CD8-positive, alpha-beta T cell (primary cell): ENCODE measurements at regions of chr10 and their contacts with region 1.

Region 1: GRCh38 chr10:30687698-30688219 is 58.2 kb upstream of the LYZL2 start:
- DNase-seq: peak; percentile 54 to 90 (median 78)
- ATAC-seq: peak; percentile 77
- H3K4me3 ChIP-seq: no peak overlapping the region
- H3K4me3 Mint-ChIP-seq: no peak overlapping the region
- H3K27ac ChIP-seq: no peak overlapping the region
- H3K27ac Mint-ChIP-seq: no peak overlapping the region
- H3K4me1 ChIP-seq: peaks cover 3% of the 10 kb centered on the region
- H3K4me1 Mint-ChIP-seq: peaks cover 3% of the 10 kb centered on the region
- H3K27me3 ChIP-seq: peaks cover 0 to 5% of the 10 kb centered on the region in 2 experiments
- H3K27me3 Mint-ChIP-seq: peaks cover 23% of the 10 kb centered on the region
- CTCF ChIP-seq: peak; percentile 97

Region 2: GRCh38 chr10:29496341-29497162 is 1191.2 kb before region 1 on chr10:
- CTCF ChIA-PET with region 1: no interaction called
- POLR2A ChIA-PET with region 1: no interaction called
- intact Hi-C with region 1: loop called in 1 of 2 experiments (anchors 5 kb)
- DNase-seq: peak; percentile 21 to 73 (median 45)
- ATAC-seq: no peak
- H3K4me3 ChIP-seq: no peak overlapping the region
- H3K4me3 Mint-ChIP-seq: no peak overlapping the region
- H3K27ac ChIP-seq: no peak overlapping the region
- H3K27ac Mint-ChIP-seq: no peak overlapping the region
- H3K4me1 ChIP-seq: no peaks in the 10 kb centered on the region
- H3K4me1 Mint-ChIP-seq: peaks cover 2% of the 10 kb centered on the region
- H3K27me3 ChIP-seq: no peaks in the 10 kb centered on the region
- H3K27me3 Mint-ChIP-seq: no peaks in the 10 kb centered on the region
- CTCF ChIP-seq: peak; percentile 96

Region 3: GRCh38 chr10:30671026-30671616 is 16.6 kb before region 1 on chr10:
- CTCF ChIA-PET with region 1: interaction called, 12 read pairs
- POLR2A ChIA-PET with region 1: no interaction called
- intact Hi-C with region 1: loop called in 1 of 2 experiments (anchors 1 kb)
- DNase-seq: peak in 4 of 9 experiments; percentile 16 to 78 (median 48)
- ATAC-seq: peak; percentile 77
- H3K4me3 ChIP-seq: peak overlapping the region in 1 of 2 experiments; percentile 1
- H3K4me3 Mint-ChIP-seq: peak overlapping the region; percentile 63
- H3K27ac ChIP-seq: no peak overlapping the region
- H3K27ac Mint-ChIP-seq: no peak overlapping the region
- H3K4me1 ChIP-seq: no peaks in the 10 kb centered on the region
- H3K4me1 Mint-ChIP-seq: peaks cover 3% of the 10 kb centered on the region
- H3K27me3 ChIP-seq: peaks cover 0 to 3% of the 10 kb centered on the region in 2 experiments
- H3K27me3 Mint-ChIP-seq: peaks cover 2% of the 10 kb centered on the region
- CTCF ChIP-seq: peak; percentile 91

Region 4: DNA sequence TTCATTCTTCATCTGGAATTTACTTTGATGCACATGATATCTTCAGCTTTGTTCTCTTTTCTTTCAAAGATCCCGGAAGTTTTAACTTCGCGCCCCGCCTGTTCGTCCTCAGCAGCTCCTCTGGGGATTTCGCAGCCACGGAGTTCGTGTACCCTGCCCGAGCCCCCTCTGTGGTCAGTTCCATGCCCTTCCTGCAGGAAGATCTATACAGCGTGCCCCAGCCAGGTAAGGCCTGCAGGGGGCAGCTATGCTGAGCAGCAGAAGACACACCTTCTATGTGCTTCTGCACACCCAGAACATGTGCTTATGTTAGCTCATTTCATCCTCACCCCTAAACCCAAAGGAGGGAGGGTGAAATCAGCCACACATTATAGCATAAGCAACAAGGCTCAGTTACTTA is 21.5 kb after region 1 on chr10:
- CTCF ChIA-PET with region 1: interaction called, 32 read pairs
- POLR2A ChIA-PET with region 1: no interaction called
- intact Hi-C with region 1: no loop called
- DNase-seq: no peak
- ATAC-seq: no peak
- H3K4me3 ChIP-seq: no peak overlapping the region
- H3K4me3 Mint-ChIP-seq: no peak overlapping the region
- H3K27ac ChIP-seq: no peak overlapping the region
- H3K27ac Mint-ChIP-seq: no peak overlapping the region
- H3K4me1 ChIP-seq: peaks cover 20% of the 10 kb centered on the region
- H3K4me1 Mint-ChIP-seq: peaks cover 19% of the 10 kb centered on the region
- H3K27me3 ChIP-seq: no peaks in the 10 kb centered on the region
- H3K27me3 Mint-ChIP-seq: no peaks in the 10 kb centered on the region
- CTCF ChIP-seq: no peak

Region 5: DNA sequence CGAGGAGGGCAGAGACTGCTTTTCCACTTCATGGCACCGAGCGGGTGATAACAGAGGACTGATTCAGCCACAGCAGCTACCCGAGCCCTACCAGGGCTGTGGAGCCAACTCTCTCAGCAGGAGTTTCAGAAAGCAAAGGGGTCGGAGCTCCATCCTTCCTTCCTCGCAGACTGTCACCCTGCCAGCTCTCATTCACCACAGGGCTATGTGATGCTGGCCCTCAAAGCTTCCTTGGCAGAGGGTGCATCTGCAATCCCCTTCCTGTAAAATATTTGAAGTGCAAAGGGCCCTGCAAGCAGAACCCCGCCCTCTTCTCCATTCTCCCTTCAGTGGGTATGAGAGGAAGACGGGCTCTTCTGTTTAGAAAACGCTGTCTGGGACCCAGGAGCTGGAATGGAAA is 47.1 kb after region 1 on chr10:
- CTCF ChIA-PET with region 1: interaction called, 10 read pairs
- POLR2A ChIA-PET with region 1: no interaction called
- intact Hi-C with region 1: no loop called
- DNase-seq: no peak
- ATAC-seq: no peak
- H3K4me3 ChIP-seq: no peak overlapping the region
- H3K4me3 Mint-ChIP-seq: no peak overlapping the region
- H3K27ac ChIP-seq: no peak overlapping the region
- H3K27ac Mint-ChIP-seq: no peak overlapping the region
- H3K4me1 ChIP-seq: no peaks in the 10 kb centered on the region
- H3K4me1 Mint-ChIP-seq: no peaks in the 10 kb centered on the region
- H3K27me3 ChIP-seq: no peaks in the 10 kb centered on the region
- H3K27me3 Mint-ChIP-seq: peaks cover 6% of the 10 kb centered on the region
- CTCF ChIP-seq: no peak

Region 6: GRCh38 chr10:31808258-31809218 is 1120.8 kb after region 1 on chr10:
- CTCF ChIA-PET with region 1: interaction called, 4 read pairs
- POLR2A ChIA-PET with region 1: no interaction called
- intact Hi-C with region 1: loop called (anchors 1 to 2 kb)
- DNase-seq: peak in 4 of 9 experiments; percentile 4 to 74 (median 39)
- ATAC-seq: peak; percentile 57
- H3K4me3 ChIP-seq: no peak overlapping the region
- H3K4me3 Mint-ChIP-seq: no peak overlapping the region
- H3K27ac ChIP-seq: no peak overlapping the region
- H3K27ac Mint-ChIP-seq: peak overlapping the region; percentile 83
- H3K4me1 ChIP-seq: no peaks in the 10 kb centered on the region
- H3K4me1 Mint-ChIP-seq: peaks cover 4% of the 10 kb centered on the region
- H3K27me3 ChIP-seq: no peaks in the 10 kb centered on the region
- H3K27me3 Mint-ChIP-seq: no peaks in the 10 kb centered on the region
- CTCF ChIP-seq: peak; percentile 64